ENCODE measurements at regions of chr19 and their contacts with region 1.

Region 1: DNA sequence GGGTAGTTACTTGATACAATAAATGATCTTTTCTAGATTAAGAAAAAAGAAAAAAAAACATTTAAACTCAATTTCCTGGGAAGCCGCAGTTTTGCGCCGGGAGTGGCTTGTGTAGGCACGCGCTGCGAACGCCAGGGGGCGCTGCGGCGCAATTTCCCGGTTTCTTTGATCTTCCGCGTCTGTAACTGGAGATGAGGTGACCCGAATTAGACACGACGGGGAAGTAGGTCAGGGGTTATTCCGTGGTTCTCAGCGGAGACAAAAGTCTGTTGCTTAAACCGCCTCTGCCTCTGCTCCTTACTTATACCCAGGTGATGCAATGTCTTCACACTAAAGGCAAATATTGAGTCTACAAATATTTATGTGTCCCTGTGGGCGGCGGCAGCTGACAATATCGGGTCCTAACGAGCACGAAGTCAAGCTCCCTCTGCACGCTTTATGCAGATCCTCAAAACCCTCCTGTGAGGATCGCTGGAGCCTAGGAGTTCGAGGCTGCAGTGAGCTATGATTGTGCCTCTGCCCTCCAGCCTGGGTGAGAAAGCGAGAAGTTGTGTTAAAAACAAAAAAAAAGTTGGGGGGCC is 15.2 kb downstream of the STXBP2 start:
- DNase-seq: peak; percentile 88
- ATAC-seq: peak; percentile 93
- H3K4me3 Mint-ChIP-seq: peak overlapping the region; percentile 63
- H3K27ac Mint-ChIP-seq: peak overlapping the region; percentile 62
- H3K4me1 Mint-ChIP-seq: peaks cover 12% of the 10 kb centered on the region
- H3K27me3 Mint-ChIP-seq: peaks cover 2% of the 10 kb centered on the region

Region 2: GRCh38 chr19:7562646-7563393 is 89.3 kb before region 1 on chr19:
- CTCF ChIA-PET with region 1: interaction called, 11 read pairs
- DNase-seq: no peak
- ATAC-seq: no peak
- H3K4me3 Mint-ChIP-seq: no peak overlapping the region
- H3K27ac Mint-ChIP-seq: no peak overlapping the region
- H3K4me1 Mint-ChIP-seq: peaks cover 4% of the 10 kb centered on the region
- H3K27me3 Mint-ChIP-seq: no peaks in the 10 kb centered on the region

Region 3: GRCh38 chr19:7629347-7630054 is 22.6 kb before region 1 on chr19 and contains the starts of genes PET100 and XAB2:
- CTCF ChIA-PET with region 1: interaction called, 10 read pairs
- DNase-seq: peak; percentile 98
- ATAC-seq: peak; percentile 99
- H3K4me3 Mint-ChIP-seq: peak within 1 kb of the TSS; percentile 97
- H3K27ac Mint-ChIP-seq: peak within 1 kb of the TSS; percentile 99
- H3K4me1 Mint-ChIP-seq: peaks cover 33% of the 10 kb centered on the region
- H3K27me3 Mint-ChIP-seq: no peaks in the 10 kb centered on the region
- total RNA-seq, gene PET100: 132 to 163 TPM
- total RNA-seq, gene XAB2: 43.7 to 51.5 TPM

Region 4: DNA sequence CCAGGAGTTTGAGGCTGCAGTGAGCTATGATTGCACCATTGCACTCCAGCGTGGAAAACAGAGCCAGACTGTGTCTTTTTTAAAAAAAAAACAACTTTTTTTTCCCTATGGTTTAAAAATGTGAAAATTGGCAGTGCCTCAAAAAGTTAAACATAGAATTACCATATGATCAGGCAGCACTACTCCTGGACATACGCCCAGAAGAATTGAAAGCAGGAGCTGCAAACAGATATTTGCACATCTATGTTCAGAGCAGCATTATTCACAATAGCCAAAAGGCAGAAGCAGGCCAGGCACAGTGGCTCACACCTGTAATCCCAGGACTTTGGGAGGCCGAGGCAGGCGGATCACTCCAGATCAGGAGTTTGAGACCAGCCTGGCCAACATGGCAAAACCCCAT is 12.9 kb after region 1 on chr19:
- CTCF ChIA-PET with region 1: interaction called, 11 read pairs
- DNase-seq: no peak
- ATAC-seq: no peak
- H3K4me3 Mint-ChIP-seq: no peak overlapping the region
- H3K27ac Mint-ChIP-seq: no peak overlapping the region
- H3K4me1 Mint-ChIP-seq: peaks cover 7% of the 10 kb centered on the region
- H3K27me3 Mint-ChIP-seq: peaks cover 7% of the 10 kb centered on the region

Region 5: DNA sequence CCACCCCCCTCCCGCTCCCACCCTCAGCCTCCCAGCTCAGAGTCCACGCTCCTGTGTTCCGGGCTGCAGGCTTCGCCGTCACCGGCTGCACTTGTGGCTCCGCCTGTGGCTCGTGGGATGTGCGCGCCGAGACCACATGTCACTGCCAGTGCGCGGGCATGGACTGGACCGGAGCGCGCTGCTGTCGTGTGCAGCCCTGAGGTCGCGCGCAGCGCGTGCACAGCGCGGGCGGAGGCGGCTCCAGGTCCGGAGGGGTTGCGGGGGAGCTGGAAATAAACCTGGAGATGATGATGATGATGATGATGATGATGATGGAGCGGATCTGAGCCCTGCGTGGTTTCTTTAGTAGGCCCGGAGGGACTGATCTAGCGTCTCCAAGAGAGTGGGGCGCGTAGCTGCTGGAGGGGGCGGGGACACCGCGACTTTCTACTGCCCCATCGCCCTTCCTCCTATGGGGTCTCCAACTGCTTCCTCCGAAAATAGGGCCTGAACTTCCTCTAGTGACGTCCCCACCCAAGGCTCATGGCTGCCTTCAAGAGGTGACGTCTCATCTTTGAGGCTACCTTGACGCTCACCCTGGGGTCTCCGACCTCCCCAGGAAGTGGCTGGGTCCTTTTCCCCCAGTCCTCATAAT is 18.1 kb after region 1 on chr19:
- CTCF ChIA-PET with region 1: interaction called, 11 read pairs
- DNase-seq: peak; percentile 57
- ATAC-seq: peak; percentile 60
- H3K4me3 Mint-ChIP-seq: peak overlapping the region; percentile 46
- H3K27ac Mint-ChIP-seq: no peak overlapping the region
- H3K4me1 Mint-ChIP-seq: peaks cover 18% of the 10 kb centered on the region
- H3K27me3 Mint-ChIP-seq: peaks cover 29% of the 10 kb centered on the region

Region 6: DNA sequence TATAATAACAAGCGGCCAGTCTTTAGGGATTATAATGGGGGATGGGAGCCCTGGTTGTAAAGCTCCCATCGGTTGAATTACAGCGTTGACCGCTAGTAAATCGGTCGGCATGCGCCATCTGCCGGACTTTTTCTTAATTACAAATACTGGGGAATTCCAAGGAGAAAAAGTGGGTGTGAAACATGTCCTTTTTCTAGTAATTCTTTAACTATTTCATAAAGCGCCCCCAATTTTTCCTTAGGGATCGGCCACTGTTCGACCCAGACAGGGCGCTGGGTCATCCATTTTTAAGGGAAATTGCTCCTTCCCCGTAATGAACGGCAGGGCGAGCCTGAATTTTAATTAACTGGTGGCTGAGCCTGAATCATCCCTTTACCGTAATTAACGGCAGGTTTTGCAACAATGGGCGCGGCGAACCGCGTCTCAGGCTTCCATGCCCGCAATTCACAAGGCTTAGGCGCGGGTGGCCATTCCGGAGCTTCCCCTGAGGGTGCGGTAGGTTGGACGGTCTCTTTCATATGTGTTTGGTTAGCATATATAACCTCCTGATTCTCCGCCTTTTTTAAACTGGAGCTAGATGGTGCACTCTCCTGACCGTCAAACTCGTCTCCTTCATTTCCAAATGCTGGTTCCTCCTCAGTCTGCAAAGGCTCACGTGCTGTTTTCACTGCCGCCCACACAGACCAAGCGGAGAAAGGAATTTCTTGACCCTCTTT is 147.6 kb after region 1 on chr19:
- CTCF ChIA-PET with region 1: interaction called, 16 read pairs
- DNase-seq: peak; percentile 60
- ATAC-seq: no peak
- H3K4me3 Mint-ChIP-seq: no peak overlapping the region
- H3K27ac Mint-ChIP-seq: no peak overlapping the region
- H3K4me1 Mint-ChIP-seq: peaks cover 2% of the 10 kb centered on the region
- H3K27me3 Mint-ChIP-seq: peaks cover 76% of the 10 kb centered on the region

Measured in activated CD8-positive, alpha-beta memory T cell treated with anti-CD3 and anti-CD28 coated beads, Interleukin-2, amount 10 ng/mL, durations not matched to agents 7 days and 5 days (primary cell).